Left ventricle myocardium inferior (tissue), 1 donor: ENCODE measurements at regions of chr1 and their contacts with region 1.

Region 1: GRCh38 chr1:1906185-1907097 is 8.6 kb upstream of the CALML6 start:
- DNase-seq: peak; percentile 88
- H3K4me3 ChIP-seq: no peak overlapping the region
- H3K27ac ChIP-seq: peak overlapping the region; percentile 94
- H3K4me1 ChIP-seq: peaks cover 41% of the 10 kb centered on the region
- H3K27me3 ChIP-seq: no peaks in the 10 kb centered on the region
- CTCF ChIP-seq: peak; percentile 95

Region 2: GRCh38 chr1:1069061-1069708 is 837.3 kb before region 1 on chr1:
- intact Hi-C with region 1: no loop called
- DNase-seq: peak; percentile 52
- H3K4me3 ChIP-seq: peak overlapping the region; percentile 64
- H3K27ac ChIP-seq: no peak overlapping the region
- H3K4me1 ChIP-seq: peaks cover 20% of the 10 kb centered on the region
- H3K27me3 ChIP-seq: peaks cover 94% of the 10 kb centered on the region
- CTCF ChIP-seq: no peak

Region 3: GRCh38 chr1:1763657-1764616 is 142.5 kb before region 1 on chr1:
- intact Hi-C with region 1: loop called (anchors 10 kb)
- DNase-seq: peak; percentile 62
- H3K4me3 ChIP-seq: no peak overlapping the region
- H3K27ac ChIP-seq: no peak overlapping the region
- H3K4me1 ChIP-seq: peaks cover 11% of the 10 kb centered on the region
- H3K27me3 ChIP-seq: no peaks in the 10 kb centered on the region
- CTCF ChIP-seq: no peak

Region 4: GRCh38 chr1:1869469-1869868 is 37.0 kb before region 1 on chr1:
- intact Hi-C with region 1: no loop called
- DNase-seq: no peak
- H3K4me3 ChIP-seq: no peak overlapping the region
- H3K27ac ChIP-seq: peak overlapping the region; percentile 39
- H3K4me1 ChIP-seq: peaks cover 99% of the 10 kb centered on the region
- H3K27me3 ChIP-seq: no peaks in the 10 kb centered on the region
- CTCF ChIP-seq: no peak

Region 5: GRCh38 chr1:2003278-2004131 is 97.1 kb after region 1 on chr1 and contains the start of gene CFAP74:
- intact Hi-C with region 1: no loop called
- DNase-seq: no peak
- H3K4me3 ChIP-seq: peak within 1 kb of the TSS; percentile 17
- H3K27ac ChIP-seq: no peak within 1 kb of the TSS
- H3K4me1 ChIP-seq: peaks cover 6% of the 10 kb centered on the region
- H3K27me3 ChIP-seq: peaks cover 99% of the 10 kb centered on the region
- CTCF ChIP-seq: no peak
- total RNA-seq, gene CFAP74: not detected